ENCODE measurements at regions of chr21 and their contacts with region 1.

Region 1: GRCh38 chr21:14737922-14738321 is 191.8 kb upstream of the SAMSN1 start:
- DNase-seq: peak; percentile 77
- H3K4me3 Mint-ChIP-seq: no peak overlapping the region
- H3K27ac Mint-ChIP-seq: no peak overlapping the region
- H3K4me1 Mint-ChIP-seq: peaks cover 17% of the 10 kb centered on the region
- H3K27me3 Mint-ChIP-seq: no peaks in the 10 kb centered on the region
- CTCF ChIP-seq: peak; percentile 63

Region 2: DNA sequence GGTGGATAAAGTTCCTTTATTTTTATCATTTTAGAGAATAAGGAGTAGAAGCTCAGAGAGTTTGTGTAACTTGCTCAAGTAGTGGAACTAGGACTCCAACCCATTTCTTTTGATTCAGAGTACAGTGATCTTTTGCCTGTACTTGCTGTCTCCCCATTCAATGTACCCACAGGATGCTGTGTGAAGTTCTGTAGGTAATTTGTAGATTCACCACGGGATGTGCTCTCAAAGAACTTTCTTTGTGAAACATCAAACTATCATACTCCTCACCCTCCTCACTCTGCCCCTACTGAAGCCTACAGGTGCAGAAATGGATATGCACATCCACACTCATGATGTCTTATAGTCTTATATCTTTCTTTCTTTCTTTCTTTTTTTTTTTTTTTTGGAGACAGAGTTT is 289.1 kb before region 1 on chr21:
- CTCF ChIA-PET with region 1: interaction called, 3 read pairs
- POLR2A ChIA-PET with region 1: no interaction called
- intact Hi-C with region 1: loop called (anchors 10 kb)
- DNase-seq: no peak
- H3K4me3 Mint-ChIP-seq: no peak overlapping the region
- H3K27ac Mint-ChIP-seq: no peak overlapping the region
- H3K4me1 Mint-ChIP-seq: no peaks in the 10 kb centered on the region
- H3K27me3 Mint-ChIP-seq: no peaks in the 10 kb centered on the region
- CTCF ChIP-seq: no peak

Region 3: DNA sequence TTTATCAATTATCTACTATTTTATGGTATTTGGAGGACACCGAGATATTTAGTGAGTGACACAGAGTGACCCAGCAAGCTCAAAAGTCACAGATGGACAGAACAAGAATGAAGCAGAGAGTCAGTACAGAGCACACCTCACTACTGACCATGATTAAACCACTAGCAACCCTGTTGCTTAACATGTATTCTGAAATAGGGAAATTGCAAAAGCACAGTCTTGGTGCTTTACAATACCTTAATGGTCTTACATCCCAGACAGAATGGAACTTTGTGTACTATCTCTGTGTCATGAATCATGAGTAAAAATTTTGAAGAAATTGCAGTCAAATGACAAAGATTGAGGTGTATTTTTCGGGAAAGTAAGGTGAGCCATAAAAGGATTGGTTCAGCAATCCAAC is 189.2 kb before region 1 on chr21:
- CTCF ChIA-PET with region 1: interaction called, 3 read pairs
- POLR2A ChIA-PET with region 1: no interaction called
- intact Hi-C with region 1: loop called (anchors 1 kb)
- DNase-seq: peak; percentile 85
- H3K4me3 Mint-ChIP-seq: peak overlapping the region; percentile 30
- H3K27ac Mint-ChIP-seq: peak overlapping the region; percentile 89
- H3K4me1 Mint-ChIP-seq: peaks cover 30% of the 10 kb centered on the region
- H3K27me3 Mint-ChIP-seq: no peaks in the 10 kb centered on the region
- CTCF ChIP-seq: no peak

Region 4: GRCh38 chr21:14630556-14631069 is 107.3 kb before region 1 on chr21:
- CTCF ChIA-PET with region 1: no interaction called
- POLR2A ChIA-PET with region 1: no interaction called
- intact Hi-C with region 1: no loop called
- DNase-seq: no peak
- H3K4me3 Mint-ChIP-seq: no peak overlapping the region
- H3K27ac Mint-ChIP-seq: no peak overlapping the region
- H3K4me1 Mint-ChIP-seq: peaks cover 6% of the 10 kb centered on the region
- H3K27me3 Mint-ChIP-seq: no peaks in the 10 kb centered on the region
- CTCF ChIP-seq: no peak